Cardiac septum (tissue), 1 donor: ENCODE measurements at regions of chr1 and their contacts with region 1.

Region 1: DNA sequence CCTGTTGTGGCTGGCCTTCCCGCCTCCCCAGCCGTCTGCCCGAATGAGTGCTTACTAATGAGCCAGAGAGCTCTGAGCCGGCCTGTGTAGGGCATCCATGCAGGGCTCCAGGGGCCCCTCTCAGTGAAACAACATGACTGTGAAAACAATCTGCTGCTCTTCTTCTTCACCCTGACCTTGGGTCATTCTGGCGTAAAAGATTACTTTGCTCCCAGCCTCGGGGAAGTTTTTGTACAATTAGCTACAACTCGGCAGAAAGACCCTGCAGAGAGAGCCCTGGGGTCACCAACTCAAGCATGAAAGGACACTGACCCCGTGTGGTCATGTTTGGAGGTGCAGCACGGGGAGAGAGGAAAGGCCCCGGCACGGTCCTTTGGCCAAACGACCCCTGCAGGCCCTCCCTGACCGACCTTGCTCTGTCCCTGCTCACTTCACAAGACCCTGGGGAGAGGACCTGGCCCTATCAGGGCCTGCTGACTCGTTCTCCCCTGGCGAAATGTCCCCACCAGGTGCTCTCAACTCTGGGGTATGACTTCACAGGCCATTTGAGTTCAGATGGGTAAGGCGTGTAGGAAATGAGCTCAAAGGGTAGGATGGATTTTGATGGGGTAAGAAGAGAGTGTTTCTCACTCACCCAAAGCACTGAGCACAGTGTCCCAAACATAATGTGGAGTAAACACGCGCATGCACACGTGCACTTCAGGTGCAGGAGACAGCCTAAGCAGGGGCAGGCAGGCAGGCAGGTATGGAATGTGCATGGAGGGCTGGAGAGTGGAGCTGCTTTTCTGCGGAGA is 22.9 kb upstream of the FAM20B start:
- DNase-seq: no peak

Region 2: GRCh38 chr1:178768423-178768822 is 234.3 kb before region 1 on chr1:
- intact Hi-C with region 1: loop called (anchors 2 kb)
- DNase-seq: no peak

Region 3: GRCh38 chr1:178818416-178818815 is 184.3 kb before region 1 on chr1:
- intact Hi-C with region 1: loop called (anchors 2 kb)
- DNase-seq: no peak